ENCODE measurements at regions of chr1 and their contacts with region 1.

Region 1: DNA sequence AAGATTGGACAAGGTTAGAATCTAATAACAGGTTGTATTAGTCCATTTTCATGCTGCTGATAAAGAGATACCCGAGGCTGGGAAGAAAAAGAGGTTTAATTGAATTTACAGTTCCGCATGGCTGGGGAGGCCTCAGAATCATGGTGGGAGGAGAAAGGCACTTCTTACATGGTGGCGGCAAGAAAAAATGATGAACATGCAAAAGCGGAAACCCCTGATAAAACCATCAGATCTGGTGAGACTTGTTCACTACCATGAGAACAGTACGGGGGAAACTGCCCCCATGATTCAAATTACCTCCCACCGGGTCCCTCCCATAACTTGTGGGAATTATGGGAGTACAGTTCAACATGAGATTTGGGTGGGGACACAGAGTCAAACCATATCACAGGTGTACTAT is 22.9 kb upstream of the TTLL7 start:
- DNase-seq: no peak
- H3K4me3 ChIP-seq: no peak overlapping the region
- H3K27ac ChIP-seq: no peak overlapping the region
- H3K4me1 ChIP-seq: peaks cover 0 to 9% (median 3%) of the 10 kb centered on the region in 4 donors
- H3K27me3 ChIP-seq: no peaks in the 10 kb centered on the region
- CTCF ChIP-seq: no peak
- EP300 ChIP-seq: no peak
- POLR2A ChIP-seq: no peak

Region 2: GRCh38 chr1:83998498-83999315 is 23.1 kb before region 1 on chr1 and contains the start of gene TTLL7:
- in situ Hi-C with region 1: no loop called
- intact Hi-C with region 1: loop called (anchors 2 kb)
- DNase-seq: peak; percentile 80
- H3K4me3 ChIP-seq: peak within 1 kb of the TSS; percentile 67 to 83 (median 70)
- H3K27ac ChIP-seq: peak within 1 kb of the TSS; percentile 74 to 83 (median 80)
- H3K4me1 ChIP-seq: peaks cover 0 to 11% (median 8%) of the 10 kb centered on the region in 4 donors
- H3K27me3 ChIP-seq: peaks cover 28% of the 10 kb centered on the region
- CTCF ChIP-seq: no peak
- EP300 ChIP-seq: no peak
- POLR2A ChIP-seq: peak; percentile 15
- total RNA-seq, gene TTLL7: 2.7 to 9.5 (median 4.2) TPM

Measured in transverse colon (tissue), 4 donors.